ENCODE measurements at regions of chr5 and their contacts with region 1.

Region 1: DNA sequence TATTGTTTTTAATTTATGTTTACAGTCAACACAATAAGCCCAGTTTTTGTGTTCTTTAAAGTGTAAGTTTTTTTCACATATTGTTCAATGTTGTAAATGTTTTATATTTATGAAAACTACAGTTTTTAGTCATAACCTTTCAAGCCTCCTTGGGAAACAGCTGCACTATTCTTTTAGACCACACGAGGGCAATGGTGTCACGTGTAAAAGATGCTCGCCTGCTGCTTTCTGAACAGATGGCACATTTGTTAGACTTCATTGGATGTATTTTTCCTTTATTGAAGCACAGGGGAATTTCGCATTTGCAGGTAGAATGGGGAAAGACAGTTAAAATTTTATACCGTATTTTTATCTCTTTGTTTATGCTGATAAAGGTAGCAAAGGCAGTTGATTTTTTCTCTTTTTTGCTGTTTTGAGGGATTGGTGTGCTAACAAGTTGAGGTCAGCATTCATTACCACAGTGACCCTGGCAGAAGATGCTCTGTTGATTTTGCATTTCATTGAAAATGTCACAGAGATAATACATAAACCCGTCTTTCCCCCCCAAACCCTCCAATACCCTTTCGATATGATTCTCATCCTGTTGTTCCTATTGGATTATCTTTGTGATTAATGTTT is 59.0 kb downstream of the MAT2B start:
- DNase-seq: no peak
- H3K4me3 ChIP-seq: no peak overlapping the region
- H3K27ac ChIP-seq: no peak overlapping the region
- H3K4me1 ChIP-seq: peaks cover 0 to 24% (median 13%) of the 10 kb centered on the region in 4 donors
- H3K27me3 ChIP-seq: peaks cover 0 to 10% (median 0%) of the 10 kb centered on the region in 3 donors
- CTCF ChIP-seq: peak; percentile 63 to 91 (median 84)
- EP300 ChIP-seq: no peak
- POLR2A ChIP-seq: no peak

Region 2: DNA sequence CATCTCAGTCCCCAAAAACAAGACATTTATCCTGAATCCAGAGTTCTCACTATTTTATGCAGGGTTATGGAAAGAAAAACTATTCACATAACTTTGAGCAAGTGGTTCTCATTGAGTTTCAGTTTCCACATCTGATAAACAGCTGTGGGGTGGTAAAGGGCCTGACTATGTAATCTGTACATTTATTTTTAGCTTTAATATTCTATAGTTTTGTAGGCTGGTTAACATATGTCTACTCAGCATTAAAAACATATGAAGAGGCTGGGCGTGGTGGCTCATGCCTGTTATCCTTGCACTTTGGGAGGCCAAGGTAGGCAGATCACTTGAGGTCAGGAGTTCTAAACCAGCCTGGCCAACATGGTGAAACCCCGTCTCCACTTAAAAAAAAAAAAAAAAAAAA is 428.6 kb before region 1 on chr5:
- intact Hi-C with region 1: no loop called
- DNase-seq: no peak
- H3K4me3 ChIP-seq: no peak overlapping the region
- H3K27ac ChIP-seq: no peak overlapping the region
- H3K4me1 ChIP-seq: no peaks in the 10 kb centered on the region
- H3K27me3 ChIP-seq: no peaks in the 10 kb centered on the region
- CTCF ChIP-seq: no peak
- EP300 ChIP-seq: no peak
- POLR2A ChIP-seq: no peak

Region 3: DNA sequence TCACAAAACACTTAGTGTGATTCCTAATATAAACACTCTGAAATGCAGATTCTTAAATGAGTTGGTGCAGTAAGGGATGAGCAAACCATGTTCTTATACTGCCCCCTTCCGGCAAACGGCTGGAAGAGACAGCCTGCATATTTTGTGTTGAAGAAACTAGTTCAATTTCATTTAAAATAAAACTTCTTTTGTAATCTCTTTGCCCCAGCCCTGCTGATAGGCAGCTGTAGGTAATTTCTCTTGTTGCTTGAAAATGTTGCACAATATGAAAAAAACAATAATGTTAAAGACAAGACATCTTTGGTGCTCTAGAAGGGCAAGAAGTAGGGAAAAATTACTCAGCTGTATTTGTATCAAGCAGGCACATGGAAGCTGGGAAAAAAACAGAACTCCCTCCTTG is 216.8 kb before region 1 on chr5:
- intact Hi-C with region 1: no loop called
- DNase-seq: no peak
- H3K4me3 ChIP-seq: no peak overlapping the region
- H3K27ac ChIP-seq: no peak overlapping the region
- H3K4me1 ChIP-seq: no peaks in the 10 kb centered on the region
- H3K27me3 ChIP-seq: no peaks in the 10 kb centered on the region
- CTCF ChIP-seq: peak in 3 of 4 experiments; percentile 45 to 72 (median 58)
- EP300 ChIP-seq: no peak
- POLR2A ChIP-seq: no peak

Region 4: GRCh38 chr5:163585206-163585605 is 20.8 kb after region 1 on chr5:
- intact Hi-C with region 1: no loop called
- DNase-seq: no peak
- H3K4me3 ChIP-seq: no peak overlapping the region
- H3K27ac ChIP-seq: peak overlapping the region in 1 of 4 donors; percentile 57
- H3K4me1 ChIP-seq: peaks cover 0 to 11% (median 4%) of the 10 kb centered on the region in 4 donors
- H3K27me3 ChIP-seq: no peaks in the 10 kb centered on the region
- CTCF ChIP-seq: no peak
- EP300 ChIP-seq: no peak
- POLR2A ChIP-seq: no peak

Region 5: GRCh38 chr5:163695830-163696578 is 131.6 kb after region 1 on chr5:
- intact Hi-C with region 1: loop called (anchors 10 kb)
- DNase-seq: no peak
- H3K4me3 ChIP-seq: no peak overlapping the region
- H3K27ac ChIP-seq: no peak overlapping the region
- H3K4me1 ChIP-seq: no peaks in the 10 kb centered on the region
- H3K27me3 ChIP-seq: no peaks in the 10 kb centered on the region
- CTCF ChIP-seq: peak in 3 of 4 experiments; percentile 32 to 64 (median 41)
- EP300 ChIP-seq: no peak
- POLR2A ChIP-seq: no peak

Region 6: GRCh38 chr5:164013077-164013670 is 448.7 kb after region 1 on chr5:
- intact Hi-C with region 1: loop called (anchors 5 kb)
- DNase-seq: peak; percentile 69
- H3K4me3 ChIP-seq: no peak overlapping the region
- H3K27ac ChIP-seq: no peak overlapping the region
- H3K4me1 ChIP-seq: peaks cover 0 to 17% (median 0%) of the 10 kb centered on the region in 4 donors
- H3K27me3 ChIP-seq: no peaks in the 10 kb centered on the region
- CTCF ChIP-seq: peak; percentile 24 to 73 (median 63)
- EP300 ChIP-seq: no peak
- POLR2A ChIP-seq: no peak

Region 7: GRCh38 chr5:164504141-164504772 is 939.8 kb after region 1 on chr5:
- intact Hi-C with region 1: loop called (anchors 2 kb)
- DNase-seq: no peak
- H3K4me3 ChIP-seq: peak overlapping the region in 1 of 4 donors; percentile 14
- H3K27ac ChIP-seq: no peak overlapping the region
- H3K4me1 ChIP-seq: peaks cover 0 to 6% (median 0%) of the 10 kb centered on the region in 4 donors
- H3K27me3 ChIP-seq: no peaks in the 10 kb centered on the region
- CTCF ChIP-seq: peak; percentile 14 to 76 (median 64)
- EP300 ChIP-seq: no peak
- POLR2A ChIP-seq: no peak

Region 8: GRCh38 chr5:165209086-165209727 is 1644.8 kb after region 1 on chr5:
- intact Hi-C with region 1: loop called (anchors 5 kb)
- DNase-seq: no peak
- H3K4me3 ChIP-seq: no peak overlapping the region
- H3K27ac ChIP-seq: no peak overlapping the region
- H3K4me1 ChIP-seq: no peaks in the 10 kb centered on the region
- H3K27me3 ChIP-seq: no peaks in the 10 kb centered on the region
- CTCF ChIP-seq: peak; percentile 10 to 53 (median 26)
- EP300 ChIP-seq: no peak
- POLR2A ChIP-seq: no peak

Measured in sigmoid colon (tissue), 7 donors.